ENCODE measurements at regions of chr17 and their contacts with region 1.

Region 1: DNA sequence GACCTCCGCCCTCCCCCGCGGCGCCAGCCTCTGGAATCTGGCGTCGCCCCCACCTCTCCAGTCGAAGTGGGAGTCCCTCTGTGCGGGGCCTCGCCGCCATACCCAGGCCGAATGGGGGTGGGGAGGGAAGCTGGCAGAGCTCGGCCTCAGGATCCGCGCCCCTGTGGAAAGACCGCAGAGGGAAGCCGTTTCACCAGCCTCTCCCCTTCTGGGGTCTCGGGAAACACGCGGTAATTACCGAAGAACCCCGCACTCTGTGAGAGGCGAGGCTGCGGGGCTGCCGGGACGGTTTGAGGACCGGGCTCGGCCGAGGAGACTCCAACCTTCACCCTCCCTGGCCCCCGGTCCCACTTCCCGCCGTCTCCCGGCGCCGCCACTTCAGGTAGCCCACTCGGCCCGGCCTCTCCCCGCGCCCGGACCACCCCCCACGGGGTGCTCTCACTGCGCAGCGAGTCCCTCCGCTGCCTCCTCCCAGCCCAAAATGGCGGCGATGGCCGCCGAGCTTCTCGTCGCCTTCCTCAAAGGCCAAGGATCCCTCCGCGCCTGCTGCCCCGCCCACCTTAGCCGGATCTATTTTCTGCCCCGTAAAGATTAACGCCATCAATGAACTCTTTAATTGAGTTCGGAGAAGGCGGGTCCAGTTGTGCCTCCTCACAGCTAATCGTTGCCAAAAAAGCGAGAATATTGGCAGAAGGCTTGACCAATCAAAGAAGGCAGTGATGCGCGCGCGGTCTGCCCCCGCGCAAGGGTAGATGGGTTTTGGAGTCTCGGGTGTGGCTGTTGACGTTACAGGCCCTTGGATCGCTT is 453 bp upstream of the HEXIM2 start:
- DNase-seq: peak; percentile 96 to 100 (median 98)
- ATAC-seq: peak; percentile 93
- H3K4me3 ChIP-seq: peak overlapping the region; percentile 82 to 84
- H3K4me3 Mint-ChIP-seq: peak overlapping the region; percentile 93
- H3K27ac ChIP-seq: peak overlapping the region; percentile 90 to 97
- H3K27ac Mint-ChIP-seq: peak overlapping the region; percentile 99
- H3K4me1 ChIP-seq: peaks cover 34% of the 10 kb centered on the region
- H3K4me1 Mint-ChIP-seq: peaks cover 40% of the 10 kb centered on the region
- H3K27me3 ChIP-seq: no peaks in the 10 kb centered on the region
- H3K27me3 Mint-ChIP-seq: no peaks in the 10 kb centered on the region
- CTCF ChIP-seq: no peak

Region 2: DNA sequence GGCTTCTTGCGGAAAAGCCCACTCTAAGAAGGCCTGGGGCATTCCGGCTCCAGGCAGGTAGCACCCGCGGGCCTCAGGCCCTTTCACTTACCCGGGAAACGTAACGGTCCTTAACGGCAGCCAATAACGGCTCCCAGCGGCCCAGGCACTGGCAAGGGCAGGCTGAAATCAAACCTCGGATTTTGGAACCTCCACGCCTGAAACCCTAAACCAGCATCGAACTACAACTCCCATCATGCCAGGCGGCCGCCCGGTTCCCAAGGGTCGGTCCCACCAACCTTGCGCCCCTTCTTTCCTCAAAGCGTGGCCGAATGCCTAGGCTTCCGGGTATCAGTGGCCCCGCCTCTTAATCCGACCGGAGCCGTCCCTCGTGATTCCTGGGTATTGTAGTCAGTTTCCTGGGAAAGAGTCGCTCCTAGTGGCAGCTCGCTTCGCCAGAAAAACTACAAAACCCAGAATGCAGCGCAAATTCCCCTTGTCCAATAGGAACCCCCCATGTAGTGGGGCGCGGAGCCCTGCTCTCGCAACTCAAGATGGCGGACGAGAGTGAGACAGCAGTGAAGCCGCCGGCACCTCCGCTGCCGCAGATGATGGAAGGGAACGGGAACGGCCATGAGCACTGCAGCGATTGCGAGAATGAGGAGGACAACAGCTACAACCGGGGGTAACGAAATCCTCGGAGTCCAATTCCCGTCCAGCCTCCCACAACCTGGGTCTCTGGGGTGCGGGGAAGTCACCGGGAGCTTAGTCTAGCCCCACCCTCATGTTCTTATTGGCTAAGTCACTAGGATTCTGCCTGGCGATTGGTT is 100.2 kb before region 1 on chr17 and contains the start of gene NMT1:
- CTCF ChIA-PET with region 1: no interaction called
- POLR2A ChIA-PET with region 1: interaction called, 6 read pairs
- intact Hi-C with region 1: loop called (anchors 1 kb)
- DNase-seq: peak; percentile 88 to 99 (median 94)
- ATAC-seq: peak; percentile 90
- H3K4me3 ChIP-seq: peak within 1 kb of the TSS; percentile 84 to 88
- H3K4me3 Mint-ChIP-seq: peak within 1 kb of the TSS; percentile 97
- H3K27ac ChIP-seq: peak within 1 kb of the TSS; percentile 81 to 91
- H3K27ac Mint-ChIP-seq: peak within 1 kb of the TSS; percentile 99
- H3K4me1 ChIP-seq: peaks cover 32% of the 10 kb centered on the region
- H3K4me1 Mint-ChIP-seq: peaks cover 43% of the 10 kb centered on the region
- H3K27me3 ChIP-seq: no peaks in the 10 kb centered on the region
- H3K27me3 Mint-ChIP-seq: no peaks in the 10 kb centered on the region
- CTCF ChIP-seq: no peak
- total RNA-seq, gene NMT1: 62.6 to 66.6 TPM

Region 3: DNA sequence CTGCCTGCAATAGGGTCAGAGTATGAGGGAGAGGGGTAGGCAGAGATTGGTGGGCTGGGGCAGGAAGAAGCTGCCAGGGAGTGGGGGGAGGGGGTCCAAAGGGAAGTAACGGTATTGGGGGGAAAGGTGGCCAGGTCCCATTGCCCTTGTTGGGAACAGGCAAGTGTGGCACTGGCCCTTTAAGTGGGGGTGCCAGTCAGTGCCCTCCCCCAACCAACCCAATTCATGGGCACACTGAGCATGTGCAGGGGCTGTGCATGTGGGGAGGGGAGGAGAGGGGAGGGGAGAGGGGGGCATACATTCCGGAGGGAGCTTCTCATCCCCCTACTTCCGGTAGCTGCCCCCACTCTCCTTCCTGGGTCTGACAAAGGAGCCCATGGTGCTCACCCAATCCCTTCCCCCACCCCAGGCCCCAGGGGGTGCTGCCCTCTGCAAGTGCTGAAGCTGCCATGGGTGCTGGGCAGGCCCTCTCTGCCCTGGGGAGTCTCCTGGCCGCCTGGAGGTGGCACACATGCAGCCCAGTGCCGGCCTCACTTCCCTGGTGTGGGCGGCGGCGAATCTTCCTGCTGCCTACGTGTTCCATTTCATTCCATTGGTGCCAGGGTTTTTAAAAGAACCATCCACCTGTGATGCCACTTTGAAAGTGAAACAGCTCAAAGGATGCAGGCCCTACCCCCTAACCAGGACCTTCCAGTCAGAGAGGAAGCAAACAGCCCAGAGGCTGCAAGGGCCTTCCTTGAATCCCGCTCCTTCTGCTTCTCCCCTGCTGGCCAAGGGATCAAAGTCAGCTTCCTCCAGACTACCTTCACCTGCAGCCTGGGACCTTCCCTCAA is 11.4 kb after region 1 on chr17:
- CTCF ChIA-PET with region 1: interaction called, 17 read pairs
- POLR2A ChIA-PET with region 1: interaction called, 42 read pairs
- intact Hi-C with region 1: loop called in 1 of 2 experiments (anchors 1 kb)
- DNase-seq: peak in 8 of 9 experiments; percentile 39 to 76 (median 52)
- ATAC-seq: peak; percentile 81
- H3K4me3 ChIP-seq: peak overlapping the region; percentile 35 to 65
- H3K4me3 Mint-ChIP-seq: peak overlapping the region; percentile 80
- H3K27ac ChIP-seq: peak overlapping the region; percentile 31 to 66
- H3K27ac Mint-ChIP-seq: peak overlapping the region; percentile 91
- H3K4me1 ChIP-seq: peaks cover 26% of the 10 kb centered on the region
- H3K4me1 Mint-ChIP-seq: peaks cover 23% of the 10 kb centered on the region
- H3K27me3 ChIP-seq: no peaks in the 10 kb centered on the region
- H3K27me3 Mint-ChIP-seq: no peaks in the 10 kb centered on the region
- CTCF ChIP-seq: no peak

Region 4: DNA sequence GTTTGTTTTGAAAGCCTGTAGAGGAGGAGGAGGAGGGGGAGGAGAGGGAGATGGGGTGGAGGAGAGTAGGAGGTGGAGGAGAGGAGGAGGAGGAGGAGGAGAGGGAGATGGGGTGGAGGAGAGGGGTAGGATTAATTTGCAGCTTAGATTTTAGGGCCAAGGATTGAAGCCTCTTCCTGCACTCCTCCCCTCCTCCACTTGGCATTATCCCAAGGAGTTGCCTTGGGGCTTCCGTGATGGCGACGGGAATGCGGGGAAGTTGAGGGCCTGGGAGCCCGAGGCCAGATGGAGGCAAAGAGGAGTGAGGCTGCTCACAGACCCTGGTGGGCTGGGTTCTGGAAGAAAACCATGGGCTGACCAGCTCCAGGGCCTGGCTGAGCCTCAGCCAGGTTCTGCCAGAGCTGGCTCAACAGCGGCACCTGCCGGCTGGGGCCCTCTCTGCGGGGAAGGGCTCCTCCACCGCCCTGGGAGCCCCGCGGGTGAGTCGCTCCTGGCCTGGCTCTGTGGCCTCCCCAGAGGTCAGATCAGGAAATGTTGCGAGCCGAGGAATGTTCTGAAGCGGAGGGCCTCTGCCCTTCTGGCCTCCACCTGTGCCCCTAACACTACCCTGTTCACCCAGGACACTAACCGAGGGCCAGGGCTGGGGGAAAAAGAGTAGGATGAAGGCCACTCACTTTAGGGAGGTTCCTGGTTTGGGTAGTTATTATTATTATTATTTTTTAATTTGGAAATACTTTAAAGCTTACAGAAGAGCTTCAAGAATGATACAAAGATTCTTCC is 36.5 kb after region 1 on chr17:
- CTCF ChIA-PET with region 1: interaction called, 22 read pairs
- POLR2A ChIA-PET with region 1: interaction called, 14 read pairs
- intact Hi-C with region 1: no loop called
- DNase-seq: peak; percentile 75 to 93 (median 86)
- ATAC-seq: peak; percentile 100
- H3K4me3 ChIP-seq: no peak overlapping the region
- H3K4me3 Mint-ChIP-seq: no peak overlapping the region
- H3K27ac ChIP-seq: no peak overlapping the region
- H3K27ac Mint-ChIP-seq: no peak overlapping the region
- H3K4me1 ChIP-seq: peaks cover 7% of the 10 kb centered on the region
- H3K4me1 Mint-ChIP-seq: peaks cover 4% of the 10 kb centered on the region
- H3K27me3 ChIP-seq: no peaks in the 10 kb centered on the region
- H3K27me3 Mint-ChIP-seq: no peaks in the 10 kb centered on the region
- CTCF ChIP-seq: peak; percentile 85

Region 5: GRCh38 chr17:45228763-45229539 is 67.7 kb after region 1 on chr17:
- CTCF ChIA-PET with region 1: interaction called, 3 read pairs
- POLR2A ChIA-PET with region 1: interaction called, 11 read pairs
- intact Hi-C with region 1: no loop called
- DNase-seq: peak; percentile 60 to 95 (median 83)
- ATAC-seq: peak; percentile 50
- H3K4me3 ChIP-seq: peak overlapping the region; percentile 84 to 97
- H3K4me3 Mint-ChIP-seq: peak overlapping the region; percentile 100
- H3K27ac ChIP-seq: peak overlapping the region; percentile 97
- H3K27ac Mint-ChIP-seq: peak overlapping the region; percentile 100
- H3K4me1 ChIP-seq: peaks cover 93% of the 10 kb centered on the region
- H3K4me1 Mint-ChIP-seq: peaks cover 82% of the 10 kb centered on the region
- H3K27me3 ChIP-seq: no peaks in the 10 kb centered on the region
- H3K27me3 Mint-ChIP-seq: no peaks in the 10 kb centered on the region
- CTCF ChIP-seq: no peak

Region 6: DNA sequence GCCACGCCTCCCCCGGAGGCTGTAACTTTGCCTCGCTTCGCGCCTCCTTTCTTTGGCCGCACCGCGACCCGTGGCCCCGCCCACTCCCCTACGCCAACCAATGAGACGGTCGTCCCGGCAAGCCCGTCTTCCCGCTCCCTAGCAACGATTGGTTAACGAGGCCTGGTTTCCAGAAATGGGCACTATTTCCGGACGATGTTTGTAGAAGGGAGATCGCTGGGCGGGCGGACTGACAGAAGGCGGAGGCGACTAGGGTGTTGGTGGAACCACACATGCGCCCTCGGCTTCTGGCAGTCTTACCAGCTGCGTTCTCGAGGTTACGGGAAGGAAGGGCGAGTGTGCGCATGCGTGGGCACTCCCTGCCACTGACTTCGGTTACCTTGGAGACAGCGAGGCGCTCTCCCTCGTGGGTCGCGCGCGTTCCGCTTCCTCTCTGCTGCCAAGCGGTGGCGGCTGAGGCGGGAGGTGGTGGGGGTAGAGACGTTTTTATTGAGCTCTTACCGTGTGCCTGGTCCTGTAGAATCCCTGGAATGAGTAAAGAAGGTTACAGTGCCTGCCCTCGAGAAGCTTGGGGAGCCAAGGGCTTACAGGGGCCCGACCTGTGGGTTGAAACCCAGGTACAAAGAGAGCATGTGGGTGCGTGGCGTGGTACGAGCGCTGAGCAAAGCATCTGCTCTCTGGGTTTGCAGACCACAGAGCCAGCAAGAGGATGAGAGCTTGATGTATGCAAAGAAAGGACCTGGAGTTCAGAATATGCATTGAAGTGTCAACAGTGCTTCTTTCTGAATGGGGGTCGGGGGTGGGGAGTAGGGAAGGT is 156.1 kb after region 1 on chr17:
- CTCF ChIA-PET with region 1: no interaction called
- POLR2A ChIA-PET with region 1: interaction called, 14 read pairs
- intact Hi-C with region 1: loop called in 1 of 2 experiments (anchors 1 kb)
- DNase-seq: peak; percentile 99 to 100 (median 100)
- ATAC-seq: peak; percentile 81
- H3K4me3 ChIP-seq: peak overlapping the region; percentile 55 to 81
- H3K4me3 Mint-ChIP-seq: peak overlapping the region; percentile 95
- H3K27ac ChIP-seq: peak overlapping the region; percentile 75 to 81
- H3K27ac Mint-ChIP-seq: peak overlapping the region; percentile 94
- H3K4me1 ChIP-seq: peaks cover 78% of the 10 kb centered on the region
- H3K4me1 Mint-ChIP-seq: peaks cover 80% of the 10 kb centered on the region
- H3K27me3 ChIP-seq: no peaks in the 10 kb centered on the region
- H3K27me3 Mint-ChIP-seq: no peaks in the 10 kb centered on the region
- CTCF ChIP-seq: no peak